Endothelial cell of umbilical vein (primary cell): ENCODE measurements at regions of chr3 and their contacts with region 1.

Region 1: DNA sequence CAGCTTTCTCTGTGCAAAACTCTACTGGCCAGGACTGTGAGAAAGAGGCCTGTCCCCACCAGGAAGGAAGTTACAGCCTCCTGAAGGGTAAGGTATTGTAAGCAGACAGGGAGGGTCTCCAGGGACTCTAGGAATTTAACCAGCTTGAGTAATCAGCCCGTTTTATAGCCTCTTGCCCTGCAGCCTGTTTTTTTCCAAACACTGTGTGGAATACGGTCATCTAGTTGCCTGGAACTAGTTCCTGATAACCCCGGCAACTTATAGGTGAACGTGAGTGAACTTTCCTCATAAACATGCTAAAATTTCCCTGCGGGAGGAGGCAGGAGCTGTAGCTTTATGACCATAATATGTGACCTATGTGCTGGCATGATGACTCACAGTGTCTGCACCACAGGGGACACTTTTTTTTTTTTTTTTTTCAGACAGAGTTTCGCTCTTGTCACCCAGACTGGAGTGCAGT is 60.1 kb upstream of the DAZL start:
- DNase-seq: no peak
- H3K4me3 ChIP-seq: no peak overlapping the region
- H3K27ac ChIP-seq: no peak overlapping the region
- H3K4me1 ChIP-seq: no peaks in the 10 kb centered on the region
- H3K27me3 ChIP-seq: peaks cover 0 to 2% of the 10 kb centered on the region in 2 experiments
- CTCF ChIP-seq: no peak
- POLR2A ChIP-seq: no peak

Region 2: DNA sequence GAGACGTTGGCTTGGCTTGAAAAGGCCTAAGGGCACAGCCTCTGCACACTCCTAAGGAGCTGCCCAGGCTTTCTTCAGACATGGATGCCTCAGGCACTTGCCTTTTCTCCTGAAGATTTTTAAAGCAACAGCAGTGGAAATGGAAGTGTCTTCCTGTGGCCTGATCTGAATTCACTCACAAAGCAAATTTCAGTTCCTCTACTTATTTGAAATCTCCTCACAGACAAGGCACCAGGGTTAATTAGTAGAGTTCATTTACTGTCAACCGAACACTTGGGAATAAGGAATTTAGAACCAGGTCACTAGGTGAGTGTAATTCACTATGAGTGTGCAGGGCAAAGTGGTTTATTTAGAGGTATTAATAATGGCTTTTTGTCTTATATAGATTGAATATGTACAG is 32.9 kb before region 1 on chr3:
- CTCF ChIA-PET with region 1: no interaction called
- POLR2A ChIA-PET with region 1: interaction called, 10 read pairs
- dilution Hi-C with region 1: no loop called
- intact Hi-C with region 1: no loop called
- DNase-seq: no peak
- H3K4me3 ChIP-seq: no peak overlapping the region
- H3K27ac ChIP-seq: no peak overlapping the region
- H3K4me1 ChIP-seq: no peaks in the 10 kb centered on the region
- H3K27me3 ChIP-seq: peaks cover 0 to 2% of the 10 kb centered on the region in 2 experiments
- CTCF ChIP-seq: no peak
- POLR2A ChIP-seq: no peak

Region 3: DNA sequence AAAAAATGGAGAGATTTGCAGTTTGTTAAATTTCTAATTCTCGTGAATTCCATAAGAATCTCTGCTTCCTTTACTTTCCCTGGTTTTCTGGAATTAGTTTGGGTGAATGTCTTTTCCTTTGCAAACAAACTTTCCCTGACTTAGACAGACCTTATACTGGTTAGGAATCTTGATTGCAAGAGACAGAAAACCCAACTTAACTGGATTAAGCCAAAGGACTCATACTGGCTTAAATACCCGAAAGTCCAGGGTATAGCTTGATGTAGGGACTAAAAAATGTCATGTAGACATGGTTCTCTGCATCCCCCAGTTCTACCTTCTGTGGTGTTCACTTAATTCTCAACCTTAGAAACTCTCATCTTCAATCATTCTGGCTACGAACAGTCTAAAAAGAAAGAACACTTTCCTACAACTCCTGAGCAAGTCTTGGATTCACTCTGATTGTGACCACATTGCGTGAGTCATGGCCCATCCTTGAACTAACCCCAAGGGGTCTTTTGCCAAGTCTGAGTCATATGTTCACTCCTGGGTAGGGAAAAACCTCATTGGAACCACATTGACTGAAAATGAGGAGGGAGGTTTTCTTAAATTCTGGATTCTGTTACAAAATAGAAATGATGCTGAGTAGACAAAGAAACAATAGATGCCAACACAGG is 75.9 kb after region 1 on chr3:
- CTCF ChIA-PET with region 1: no interaction called
- POLR2A ChIA-PET with region 1: no interaction called
- dilution Hi-C with region 1: no loop called
- intact Hi-C with region 1: no loop called
- DNase-seq: no peak
- H3K4me3 ChIP-seq: no peak overlapping the region
- H3K27ac ChIP-seq: no peak overlapping the region
- H3K4me1 ChIP-seq: no peaks in the 10 kb centered on the region
- H3K27me3 ChIP-seq: no peaks in the 10 kb centered on the region
- CTCF ChIP-seq: no peak
- POLR2A ChIP-seq: no peak

Region 4: DNA sequence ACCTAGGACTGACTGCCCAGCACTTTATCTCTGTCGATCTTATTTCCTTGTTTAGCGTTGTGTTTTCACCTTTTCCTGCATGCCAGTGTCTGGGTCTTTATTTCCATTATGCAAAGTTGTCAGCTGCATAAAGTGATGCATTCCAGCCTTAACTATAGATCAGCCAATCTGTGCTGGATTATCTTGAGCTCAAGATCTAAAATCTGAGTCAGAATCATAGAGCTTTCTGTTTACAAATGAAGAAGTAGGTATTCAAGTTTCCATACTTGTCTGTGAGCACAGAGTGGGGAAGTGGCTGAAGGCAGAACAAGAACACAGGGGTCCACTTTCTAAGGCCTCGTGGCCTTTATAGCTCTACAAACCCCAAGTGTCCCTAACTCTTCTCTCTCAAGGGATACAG is 137.1 kb after region 1 on chr3:
- CTCF ChIA-PET with region 1: no interaction called
- POLR2A ChIA-PET with region 1: no interaction called
- dilution Hi-C with region 1: no loop called
- intact Hi-C with region 1: no loop called
- DNase-seq: no peak
- H3K4me3 ChIP-seq: no peak overlapping the region
- H3K27ac ChIP-seq: no peak overlapping the region
- H3K4me1 ChIP-seq: no peaks in the 10 kb centered on the region
- H3K27me3 ChIP-seq: peaks cover 4 to 5% of the 10 kb centered on the region in 2 experiments
- CTCF ChIP-seq: no peak
- POLR2A ChIP-seq: no peak

Region 5: GRCh38 chr3:16912400-16913263 is 247.3 kb after region 1 on chr3:
- CTCF ChIA-PET with region 1: no interaction called
- POLR2A ChIA-PET with region 1: no interaction called
- dilution Hi-C with region 1: no loop called
- intact Hi-C with region 1: no loop called
- DNase-seq: no peak
- H3K4me3 ChIP-seq: no peak overlapping the region
- H3K27ac ChIP-seq: no peak overlapping the region
- H3K4me1 ChIP-seq: peaks cover 37% of the 10 kb centered on the region
- H3K27me3 ChIP-seq: no peaks in the 10 kb centered on the region
- CTCF ChIP-seq: no peak
- POLR2A ChIP-seq: no peak